ENCODE measurements at regions of chr2 and their contacts with region 1.

Region 1: DNA sequence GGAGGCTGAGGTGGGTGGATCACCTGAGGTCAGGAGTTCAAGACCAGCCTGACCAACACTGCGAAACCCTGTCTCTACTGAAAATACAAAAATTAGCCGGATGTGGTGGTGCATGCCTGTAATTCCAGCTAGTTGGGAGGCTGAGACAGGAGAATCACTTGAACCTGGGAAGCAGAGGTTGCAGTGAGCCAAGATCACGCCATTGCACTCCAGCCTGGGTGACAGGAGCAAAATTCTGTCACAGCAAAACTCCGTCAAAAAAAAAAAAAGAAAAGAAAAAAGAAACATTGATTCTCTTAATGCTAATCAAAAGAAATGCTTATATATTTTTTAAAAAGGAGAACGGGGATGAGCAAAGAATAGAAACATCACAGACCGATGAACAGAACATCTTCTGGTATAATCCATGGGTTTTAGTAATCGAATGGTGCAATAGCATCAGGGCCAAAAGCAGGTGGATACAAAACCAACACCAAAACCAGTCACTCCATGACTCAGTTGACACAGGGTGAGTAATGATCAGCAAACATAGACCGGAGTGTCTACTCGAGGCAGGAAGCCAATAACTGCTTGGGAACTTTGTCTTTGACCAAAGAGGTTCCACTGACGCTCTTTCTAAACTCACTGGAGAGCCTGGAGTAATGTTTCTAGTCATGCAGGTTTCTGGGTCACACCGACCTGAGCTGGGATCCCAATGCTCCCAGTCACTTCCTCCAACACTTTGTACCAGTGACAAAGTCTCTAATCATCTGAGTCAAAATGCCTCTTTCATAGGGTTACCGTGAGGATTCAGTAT is 31.1 kb downstream of the MREG start:
- DNase-seq: peak; percentile 57
- ATAC-seq: no peak
- H3K4me3 ChIP-seq: no peak overlapping the region
- H3K27ac ChIP-seq: peak overlapping the region; percentile 37
- H3K4me1 ChIP-seq: peaks cover 15% of the 10 kb centered on the region
- H3K27me3 ChIP-seq: no peaks in the 10 kb centered on the region
- CTCF ChIP-seq: no peak
- EP300 ChIP-seq: no peak
- POLR2A ChIP-seq: no peak
- RAD21 ChIP-seq: no peak

Region 2: GRCh38 chr2:215969131-215969841 is 13.0 kb before region 1 on chr2:
- CTCF ChIA-PET with region 1: interaction called, 5 read pairs
- POLR2A ChIA-PET with region 1: interaction called, 4 read pairs
- RAD21 ChIA-PET with region 1: no interaction called
- SMC1A ChIA-PET with region 1: interaction called, 18 read pairs
- in situ Hi-C with region 1: no loop called
- intact Hi-C with region 1: no loop called
- DNase-seq: no peak
- ATAC-seq: peak; percentile 27; the same call in 1 of the 3 replicates
- H3K4me3 ChIP-seq: no peak overlapping the region
- H3K27ac ChIP-seq: peak overlapping the region; percentile 20; the same call in 1 of the 2 replicates
- H3K4me1 ChIP-seq: peaks cover 5% of the 10 kb centered on the region; the same call in 1 of the 2 replicates
- H3K27me3 ChIP-seq: no peaks in the 10 kb centered on the region
- CTCF ChIP-seq: no peak
- EP300 ChIP-seq: no peak
- POLR2A ChIP-seq: no peak
- RAD21 ChIP-seq: no peak

Region 3: DNA sequence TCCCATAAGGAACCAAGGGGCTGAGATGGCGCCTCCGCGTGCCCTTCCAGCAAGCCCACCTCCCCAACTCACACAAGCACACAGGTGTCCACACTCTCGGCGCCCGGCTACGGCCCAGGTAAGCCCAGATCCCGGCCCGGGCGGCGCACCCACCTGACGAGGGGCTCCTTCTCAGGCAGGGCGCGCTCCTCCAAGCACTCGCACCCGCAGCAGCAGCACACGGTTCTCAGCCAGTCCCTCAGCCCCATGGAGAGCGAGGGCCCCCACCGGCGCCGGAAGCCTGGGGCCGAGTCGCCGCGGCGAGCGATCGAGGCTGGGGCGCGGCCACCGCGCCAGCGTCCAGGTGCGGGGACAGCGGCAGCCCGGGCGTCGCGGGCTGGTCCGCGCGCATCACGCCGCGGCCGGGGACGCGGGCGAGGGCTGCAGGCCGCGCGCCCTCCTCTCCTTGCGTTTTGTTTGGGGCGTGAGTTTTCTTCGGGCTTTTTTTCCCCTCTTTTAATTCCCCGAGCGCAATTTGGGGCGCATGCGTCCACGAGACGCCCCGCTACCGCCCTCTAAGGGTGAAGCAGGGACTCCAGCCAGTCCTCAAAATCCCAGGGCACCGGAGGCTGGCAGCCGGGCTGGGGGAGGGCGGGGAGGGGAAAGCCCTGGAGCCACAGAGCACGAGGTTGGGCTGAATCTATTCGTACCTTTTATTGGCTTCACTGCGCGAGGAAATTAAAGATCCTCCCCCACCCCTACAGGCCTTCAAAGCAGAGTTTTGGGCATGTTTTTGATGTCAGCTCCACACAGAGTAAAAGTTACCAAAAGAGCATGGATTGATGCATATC is 31.0 kb after region 1 on chr2 and contains the start of gene MREG:
- CTCF ChIA-PET with region 1: interaction called, 5 read pairs
- POLR2A ChIA-PET with region 1: interaction called, 6 read pairs
- RAD21 ChIA-PET with region 1: interaction called, 7 read pairs
- SMC1A ChIA-PET with region 1: interaction called, 9 read pairs
- in situ Hi-C with region 1: no loop called
- intact Hi-C with region 1: loop called (anchors 2 kb)
- DNase-seq: no peak
- ATAC-seq: peak; percentile 45
- H3K4me3 ChIP-seq: peak within 1 kb of the TSS; percentile 94
- H3K27ac ChIP-seq: peak within 1 kb of the TSS; percentile 93
- H3K4me1 ChIP-seq: peaks cover 31% of the 10 kb centered on the region
- H3K27me3 ChIP-seq: no peaks in the 10 kb centered on the region
- CTCF ChIP-seq: peak; percentile 74 to 88 (median 78)
- EP300 ChIP-seq: no peak
- POLR2A ChIP-seq: peak; percentile 86
- RAD21 ChIP-seq: peak; percentile 54
- polyA plus RNA-seq, gene MREG: 16.8 to 21.3 TPM

Region 4: GRCh38 chr2:216023055-216023648 is 40.9 kb after region 1 on chr2:
- CTCF ChIA-PET with region 1: interaction called, 18 read pairs
- POLR2A ChIA-PET with region 1: no interaction called
- RAD21 ChIA-PET with region 1: interaction called, 7 read pairs
- SMC1A ChIA-PET with region 1: interaction called, 9 read pairs
- in situ Hi-C with region 1: no loop called
- intact Hi-C with region 1: no loop called
- DNase-seq: no peak
- ATAC-seq: peak; percentile 97
- H3K4me3 ChIP-seq: no peak overlapping the region
- H3K27ac ChIP-seq: no peak overlapping the region
- H3K4me1 ChIP-seq: no peaks in the 10 kb centered on the region
- H3K27me3 ChIP-seq: no peaks in the 10 kb centered on the region
- CTCF ChIP-seq: peak; percentile 70 to 73 (median 71)
- EP300 ChIP-seq: no peak
- POLR2A ChIP-seq: no peak
- RAD21 ChIP-seq: peak; percentile 89